Stomach (tissue), 19 donors: ENCODE measurements at regions of chr11 and their contacts with region 1.

Region 1: GRCh38 chr11:78228467-78228866 is 39.7 kb downstream of the USP35 start:
- DNase-seq: peak in 1 of 2 donors; percentile 86
- H3K4me3 ChIP-seq: no peak overlapping the region
- H3K27ac ChIP-seq: no peak overlapping the region
- H3K4me1 ChIP-seq: peaks cover 0 to 25% (median 12%) of the 10 kb centered on the region in 4 donors
- H3K27me3 ChIP-seq: no peaks in the 10 kb centered on the region
- CTCF ChIP-seq: peak in 5 of 7 experiments; percentile 10 to 58 (median 27)
- EP300 ChIP-seq: no peak
- POLR2A ChIP-seq: no peak

Region 2: GRCh38 chr11:77473801-77474683 is 754.4 kb before region 1 on chr11 and contains the start of gene PAK1:
- intact Hi-C with region 1: no loop called
- DNase-seq: peak; percentile 95 to 98
- H3K4me3 ChIP-seq: peak within 1 kb of the TSS; percentile 62 to 88 (median 74)
- H3K27ac ChIP-seq: peak within 1 kb of the TSS; percentile 88 to 98 (median 93)
- H3K4me1 ChIP-seq: peaks cover 22 to 40% (median 27%) of the 10 kb centered on the region in 4 donors
- H3K27me3 ChIP-seq: no peaks in the 10 kb centered on the region
- CTCF ChIP-seq: peak in 1 of 7 experiments; percentile 30
- EP300 ChIP-seq: no peak
- POLR2A ChIP-seq: no peak
- total RNA-seq, gene PAK1: 31.2 to 89.5 (median 70.4) TPM

Region 3: GRCh38 chr11:77789061-77789730 is 439.3 kb before region 1 on chr11:
- intact Hi-C with region 1: no loop called
- DNase-seq: no peak
- H3K4me3 ChIP-seq: no peak overlapping the region
- H3K27ac ChIP-seq: no peak overlapping the region
- H3K4me1 ChIP-seq: peaks cover 0 to 45% (median 15%) of the 10 kb centered on the region in 4 donors
- H3K27me3 ChIP-seq: no peaks in the 10 kb centered on the region
- CTCF ChIP-seq: no peak
- EP300 ChIP-seq: no peak
- POLR2A ChIP-seq: no peak

Region 4: GRCh38 chr11:78109081-78110015 is 119.1 kb before region 1 on chr11:
- intact Hi-C with region 1: no loop called
- DNase-seq: no peak
- H3K4me3 ChIP-seq: no peak overlapping the region
- H3K27ac ChIP-seq: no peak overlapping the region
- H3K4me1 ChIP-seq: no peaks in the 10 kb centered on the region
- H3K27me3 ChIP-seq: no peaks in the 10 kb centered on the region
- CTCF ChIP-seq: no peak
- EP300 ChIP-seq: no peak
- POLR2A ChIP-seq: no peak

Region 5: DNA sequence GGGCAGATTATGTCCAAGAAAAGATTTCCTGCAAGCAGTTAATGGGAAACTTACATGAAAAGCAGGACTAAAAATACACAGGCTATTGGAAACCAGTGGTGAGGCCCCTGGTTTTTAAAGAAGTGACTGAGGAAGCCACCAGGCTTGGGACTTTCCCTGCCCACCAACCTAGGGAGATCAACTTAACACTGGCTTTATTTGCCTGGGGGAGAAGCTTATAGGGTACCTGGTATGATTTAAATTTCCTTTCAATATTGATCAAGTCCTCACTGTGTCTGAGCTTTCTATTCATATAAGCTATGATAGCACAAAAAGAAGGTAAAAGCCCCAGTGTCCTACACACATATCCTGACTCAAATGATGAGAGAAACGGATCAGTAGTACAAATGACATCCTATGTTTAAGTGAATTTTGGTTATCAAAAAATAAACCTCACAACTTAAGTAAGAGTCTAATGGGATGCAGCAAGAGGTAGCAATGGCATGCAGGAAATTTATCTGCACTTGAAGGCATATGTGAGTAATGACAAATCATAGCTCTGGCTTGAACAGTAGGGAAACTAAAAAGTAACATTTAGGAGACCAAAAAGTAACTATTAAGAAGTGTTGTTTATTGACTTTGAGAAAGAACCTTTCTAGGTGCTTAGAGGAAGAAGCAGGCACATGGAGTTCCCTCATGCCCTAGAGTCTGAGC is 103.9 kb after region 1 on chr11:
- intact Hi-C with region 1: no loop called
- DNase-seq: no peak
- H3K4me3 ChIP-seq: no peak overlapping the region
- H3K27ac ChIP-seq: no peak overlapping the region
- H3K4me1 ChIP-seq: peaks cover 0 to 28% (median 7%) of the 10 kb centered on the region in 4 donors
- H3K27me3 ChIP-seq: no peaks in the 10 kb centered on the region
- CTCF ChIP-seq: no peak
- EP300 ChIP-seq: no peak
- POLR2A ChIP-seq: no peak

Region 6: DNA sequence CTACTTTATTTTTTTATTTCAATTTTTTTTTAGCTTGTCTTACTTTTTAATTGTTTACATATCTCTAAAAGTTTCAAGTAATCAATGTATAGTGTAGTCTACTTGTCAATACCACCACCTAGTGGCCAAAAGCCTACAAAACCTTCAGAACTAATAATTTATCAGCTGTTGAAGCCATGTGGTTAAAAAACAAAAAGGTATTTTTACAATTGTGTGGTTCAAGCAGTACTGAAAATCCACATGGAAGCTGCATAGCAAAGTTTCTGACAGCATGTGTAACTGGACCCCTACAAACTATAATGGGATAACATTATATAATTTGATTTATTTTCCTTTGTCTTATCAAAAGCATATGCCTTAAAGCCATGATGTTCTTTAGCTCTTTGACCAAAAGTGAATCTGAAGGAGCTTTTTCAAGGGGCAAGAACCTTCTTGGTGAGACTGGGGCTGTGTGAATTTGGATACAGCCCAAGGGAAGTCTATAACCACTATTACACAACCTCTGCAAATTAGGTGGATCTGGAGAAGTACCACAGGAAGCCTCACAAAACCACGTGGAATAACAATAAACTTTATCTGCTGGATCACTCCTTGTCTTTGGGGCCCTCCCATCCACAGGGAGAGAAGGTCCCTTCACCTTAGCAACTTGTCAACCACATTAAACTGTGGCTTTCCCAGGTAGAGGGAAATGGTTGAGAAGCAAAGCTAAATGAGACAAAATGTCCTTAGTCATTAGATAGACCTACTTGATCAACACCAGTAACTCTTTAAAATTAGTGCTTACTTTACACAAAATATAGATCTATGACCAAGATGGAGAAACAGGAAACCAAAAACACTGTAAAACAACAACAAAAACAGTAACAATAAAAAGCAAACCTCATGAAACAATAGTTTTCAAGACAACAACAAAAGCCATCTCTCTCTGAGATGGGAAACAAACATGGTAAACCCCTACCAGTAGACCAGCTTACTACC is 336.3 kb after region 1 on chr11:
- intact Hi-C with region 1: loop called (anchors 10 kb)
- DNase-seq: peak in 1 of 2 donors; percentile 87
- H3K4me3 ChIP-seq: no peak overlapping the region
- H3K27ac ChIP-seq: no peak overlapping the region
- H3K4me1 ChIP-seq: peaks cover 12 to 43% (median 34%) of the 10 kb centered on the region in 4 donors
- H3K27me3 ChIP-seq: no peaks in the 10 kb centered on the region
- CTCF ChIP-seq: peak in 5 of 7 experiments; percentile 47 to 82 (median 74)
- EP300 ChIP-seq: no peak
- POLR2A ChIP-seq: no peak